OCI-LY7 (cell line): ENCODE measurements at regions of chr3 and their contacts with region 1.

Region 1: GRCh38 chr3:157618075-157618760 is 115.0 kb upstream of the VEPH1 start:
- DNase-seq: peak; percentile 60
- H3K4me3 ChIP-seq: no peak overlapping the region
- H3K27ac ChIP-seq: no peak overlapping the region
- H3K4me1 ChIP-seq: no peaks in the 10 kb centered on the region
- CTCF ChIP-seq: peak; percentile 83

Region 2: GRCh38 chr3:158313338-158313927 is 695.2 kb after region 1 on chr3:
- CTCF ChIA-PET with region 1: no interaction called
- POLR2A ChIA-PET with region 1: no interaction called
- intact Hi-C with region 1: loop called (anchors 2 kb)
- DNase-seq: peak; percentile 52
- H3K4me3 ChIP-seq: no peak overlapping the region
- H3K27ac ChIP-seq: no peak overlapping the region
- H3K4me1 ChIP-seq: no peaks in the 10 kb centered on the region
- CTCF ChIP-seq: peak; percentile 94

Region 3: DNA sequence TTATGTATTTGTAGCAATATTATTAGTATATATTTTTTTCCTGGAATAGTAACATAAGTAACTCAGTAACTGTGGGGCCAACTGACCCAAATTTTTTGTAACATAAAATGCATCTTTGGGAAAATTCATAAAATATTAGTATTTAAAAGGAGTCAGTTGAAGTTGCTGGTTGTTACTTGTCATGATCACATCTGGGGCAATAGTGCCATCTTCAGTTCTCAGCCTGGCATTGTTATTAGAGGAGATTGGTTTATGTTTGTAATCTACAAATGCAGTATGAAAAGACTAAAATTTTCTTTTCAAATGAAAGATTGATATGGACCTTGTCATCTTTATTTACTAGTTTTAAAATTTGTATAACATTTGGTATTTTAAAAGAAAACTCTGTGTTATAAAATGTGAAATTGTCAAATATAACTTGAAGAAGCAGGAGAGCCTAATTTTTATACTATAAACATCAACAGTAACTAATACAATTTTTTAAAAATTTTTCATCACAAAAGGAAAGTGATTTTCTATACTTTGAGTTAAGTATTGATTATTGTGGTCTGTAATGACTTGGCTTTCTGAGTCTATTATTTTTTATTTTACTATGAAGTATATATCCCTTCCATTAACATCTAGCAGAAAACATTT is 914.0 kb after region 1 on chr3:
- CTCF ChIA-PET with region 1: no interaction called
- POLR2A ChIA-PET with region 1: no interaction called
- intact Hi-C with region 1: loop called (anchors 5 kb)
- DNase-seq: peak; percentile 29
- H3K4me3 ChIP-seq: no peak overlapping the region
- H3K27ac ChIP-seq: no peak overlapping the region
- H3K4me1 ChIP-seq: no peaks in the 10 kb centered on the region
- CTCF ChIP-seq: peak; percentile 79